CD4-positive, alpha-beta memory T cell (primary cell): ENCODE measurements at regions of chr1 and their contacts with region 1.

Region 1: DNA sequence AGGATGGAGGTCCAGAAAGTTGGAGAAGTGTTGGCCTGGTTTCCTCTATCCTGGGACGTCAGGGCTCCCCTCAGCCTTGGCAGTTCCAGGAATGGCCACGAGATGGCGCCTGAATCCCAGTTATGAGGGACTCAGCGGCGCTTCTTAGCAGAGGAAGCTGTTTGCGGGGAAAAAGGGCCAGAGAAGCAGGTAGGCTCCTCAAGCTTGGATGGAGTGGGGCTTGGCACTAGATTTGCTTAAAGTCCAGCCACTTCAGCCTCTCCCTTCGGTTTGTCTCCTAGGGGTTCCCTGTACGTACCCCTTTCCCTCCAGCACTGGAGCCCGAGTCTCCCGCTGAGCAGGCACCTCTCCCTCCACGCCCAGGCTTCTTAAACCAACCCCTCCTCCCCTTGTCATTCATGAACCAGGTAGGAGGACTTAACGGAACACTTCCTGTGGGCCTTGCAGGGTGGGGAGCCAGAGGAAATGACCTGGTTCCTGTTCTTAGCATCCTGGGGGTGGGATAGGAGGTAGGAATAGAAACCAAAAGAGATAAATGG is 32.0 kb upstream of the TENT5B start:
- DNase-seq: peak; percentile 77 to 84 (median 81)
- H3K4me3 ChIP-seq: peak overlapping the region in 1 of 2 donors; percentile 32
- H3K4me3 Mint-ChIP-seq: peak overlapping the region; percentile 53 to 70 (median 66)
- H3K27ac ChIP-seq: peak overlapping the region; percentile 24
- H3K27ac Mint-ChIP-seq: peak overlapping the region in 6 of 7 donors; percentile 18 to 79 (median 42)
- H3K4me1 ChIP-seq: peaks cover 14% of the 10 kb centered on the region
- H3K4me1 Mint-ChIP-seq: peaks cover 13 to 22% (median 18%) of the 10 kb centered on the region in 4 donors
- H3K27me3 ChIP-seq: no peaks in the 10 kb centered on the region
- H3K27me3 Mint-ChIP-seq: peaks cover 0 to 2% of the 10 kb centered on the region in 2 donors

Region 2: DNA sequence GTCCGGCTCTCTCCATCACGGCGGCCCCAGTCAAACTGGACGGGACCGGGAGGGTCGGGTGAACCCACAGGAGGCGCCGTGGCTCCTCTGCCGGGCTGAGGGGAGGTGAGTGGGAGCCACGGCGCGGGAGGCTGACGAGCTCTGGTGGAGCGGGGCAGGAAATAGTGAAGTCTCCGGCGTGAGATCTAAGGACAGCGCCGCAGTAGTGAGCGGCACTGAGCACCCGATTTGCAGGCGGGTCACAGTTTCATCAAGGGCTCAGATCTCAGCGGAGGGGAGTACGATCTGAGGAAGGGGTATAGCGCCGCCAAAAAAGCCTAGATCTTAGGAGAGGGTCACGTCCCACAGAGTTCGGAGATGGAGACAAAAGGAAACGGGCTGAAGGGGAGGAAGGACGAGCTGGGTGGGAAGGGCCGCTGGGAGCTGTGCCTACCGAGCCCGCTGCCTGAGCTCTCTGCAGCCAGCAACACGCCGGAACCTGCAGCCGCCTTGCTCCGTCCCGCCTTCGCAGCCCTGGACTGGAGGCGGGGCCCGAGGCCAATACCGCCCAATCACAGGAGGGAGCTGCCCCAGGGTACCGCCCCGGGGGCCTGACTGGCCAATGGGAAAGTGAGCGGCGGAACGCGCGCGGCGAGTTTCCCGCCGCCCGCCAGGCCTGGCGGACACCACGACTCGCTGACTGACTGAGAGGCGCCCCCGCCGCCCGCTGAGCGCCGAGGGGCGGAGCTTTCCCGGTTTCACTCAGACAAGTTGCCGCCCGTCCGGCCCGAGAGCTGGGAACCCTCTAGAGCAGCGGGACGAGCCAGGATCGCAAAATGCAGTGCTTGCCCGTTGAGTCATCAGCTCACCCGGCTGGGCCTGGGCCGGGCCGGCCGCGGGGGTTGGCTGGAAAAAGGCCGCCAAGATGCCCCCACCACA is 179.8 kb before region 1 on chr1:
- CTCF ChIA-PET with region 1: no interaction called
- POLR2A ChIA-PET with region 1: no interaction called
- intact Hi-C with region 1: no loop called
- DNase-seq: peak; percentile 93 to 95 (median 93)
- H3K4me3 ChIP-seq: peak overlapping the region; percentile 86 to 91
- H3K4me3 Mint-ChIP-seq: peak overlapping the region; percentile 93 to 99 (median 96)
- H3K27ac ChIP-seq: peak overlapping the region; percentile 75
- H3K27ac Mint-ChIP-seq: peak overlapping the region; percentile 86 to 97 (median 94)
- H3K4me1 ChIP-seq: peaks cover 30% of the 10 kb centered on the region
- H3K4me1 Mint-ChIP-seq: peaks cover 8 to 31% (median 23%) of the 10 kb centered on the region in 4 donors
- H3K27me3 ChIP-seq: no peaks in the 10 kb centered on the region
- H3K27me3 Mint-ChIP-seq: no peaks in the 10 kb centered on the region

Region 3: DNA sequence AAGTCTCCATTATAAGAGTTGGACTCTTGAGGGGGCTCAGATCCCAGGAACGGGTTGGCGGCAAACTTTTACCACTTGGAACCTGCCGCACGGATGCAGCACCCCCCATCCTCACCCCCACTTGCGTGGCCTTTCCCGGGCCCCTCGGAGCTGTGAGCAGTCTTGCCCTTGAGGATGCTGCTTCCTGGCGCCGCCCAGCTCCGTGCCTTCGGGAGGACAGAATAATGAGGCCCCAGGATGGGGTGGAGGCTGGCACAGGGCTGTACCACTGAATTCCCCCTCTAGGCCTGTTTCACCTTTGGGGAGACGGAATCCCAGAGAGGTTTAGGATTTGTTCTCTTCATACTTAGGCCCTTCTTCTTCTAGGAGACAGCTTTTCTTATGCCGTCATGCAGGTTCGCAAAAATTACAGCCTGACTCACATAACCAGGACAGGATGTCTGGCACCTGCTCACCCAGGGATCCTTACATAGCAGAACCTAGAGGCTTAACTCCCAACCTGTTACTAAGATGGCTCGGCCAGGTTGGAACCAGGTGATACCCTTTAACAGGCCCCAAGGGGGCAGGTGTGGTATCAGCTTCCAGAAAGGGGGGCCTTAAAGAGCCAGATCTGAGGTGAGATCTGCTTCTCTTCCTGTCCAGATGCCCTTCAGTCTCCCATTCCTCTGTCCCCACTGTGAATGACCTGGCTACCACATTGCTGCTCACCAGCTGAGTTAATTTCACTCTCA is 49.7 kb before region 1 on chr1:
- CTCF ChIA-PET with region 1: interaction called, 18 read pairs
- POLR2A ChIA-PET with region 1: no interaction called
- intact Hi-C with region 1: no loop called
- DNase-seq: no peak
- H3K4me3 ChIP-seq: peak overlapping the region in 1 of 2 donors; percentile 19
- H3K4me3 Mint-ChIP-seq: peak overlapping the region; percentile 59 to 90 (median 79)
- H3K27ac ChIP-seq: no peak overlapping the region
- H3K27ac Mint-ChIP-seq: peak overlapping the region in 1 of 7 donors; percentile 52
- H3K4me1 ChIP-seq: peaks cover 13% of the 10 kb centered on the region
- H3K4me1 Mint-ChIP-seq: peaks cover 6 to 25% (median 10%) of the 10 kb centered on the region in 4 donors
- H3K27me3 ChIP-seq: peaks cover 14% of the 10 kb centered on the region
- H3K27me3 Mint-ChIP-seq: peaks cover 25 to 27% of the 10 kb centered on the region in 2 donors

Region 4: GRCh38 chr1:27033043-27033746 is 11.5 kb before region 1 on chr1:
- CTCF ChIA-PET with region 1: interaction called, 29 read pairs
- POLR2A ChIA-PET with region 1: no interaction called
- intact Hi-C with region 1: no loop called
- DNase-seq: no peak
- H3K4me3 ChIP-seq: no peak overlapping the region
- H3K4me3 Mint-ChIP-seq: no peak overlapping the region
- H3K27ac ChIP-seq: no peak overlapping the region
- H3K27ac Mint-ChIP-seq: no peak overlapping the region
- H3K4me1 ChIP-seq: no peaks in the 10 kb centered on the region
- H3K4me1 Mint-ChIP-seq: no peaks in the 10 kb centered on the region
- H3K27me3 ChIP-seq: no peaks in the 10 kb centered on the region
- H3K27me3 Mint-ChIP-seq: peaks cover 0 to 3% of the 10 kb centered on the region in 2 donors

Region 5: GRCh38 chr1:27074175-27074780 is 29.6 kb after region 1 on chr1:
- CTCF ChIA-PET with region 1: interaction called, 13 read pairs
- POLR2A ChIA-PET with region 1: no interaction called
- intact Hi-C with region 1: no loop called
- DNase-seq: no peak
- H3K4me3 ChIP-seq: no peak overlapping the region
- H3K4me3 Mint-ChIP-seq: no peak overlapping the region
- H3K27ac ChIP-seq: no peak overlapping the region
- H3K27ac Mint-ChIP-seq: no peak overlapping the region
- H3K4me1 ChIP-seq: no peaks in the 10 kb centered on the region
- H3K4me1 Mint-ChIP-seq: no peaks in the 10 kb centered on the region
- H3K27me3 ChIP-seq: no peaks in the 10 kb centered on the region
- H3K27me3 Mint-ChIP-seq: peaks cover 1 to 4% of the 10 kb centered on the region in 2 donors

Region 6: GRCh38 chr1:27097484-27097917 is 52.8 kb after region 1 on chr1:
- CTCF ChIA-PET with region 1: interaction called, 247 read pairs
- POLR2A ChIA-PET with region 1: interaction called, 3 read pairs
- intact Hi-C with region 1: loop called (anchors 1 kb)
- DNase-seq: peak; percentile 64 to 72 (median 68)
- H3K4me3 ChIP-seq: no peak overlapping the region
- H3K4me3 Mint-ChIP-seq: no peak overlapping the region
- H3K27ac ChIP-seq: no peak overlapping the region
- H3K27ac Mint-ChIP-seq: peak overlapping the region in 1 of 7 donors; percentile 40
- H3K4me1 ChIP-seq: no peaks in the 10 kb centered on the region
- H3K4me1 Mint-ChIP-seq: peaks cover 0 to 4% (median 3%) of the 10 kb centered on the region in 4 donors
- H3K27me3 ChIP-seq: no peaks in the 10 kb centered on the region
- H3K27me3 Mint-ChIP-seq: no peaks in the 10 kb centered on the region